Ascending aorta (tissue), 2 donors: ENCODE measurements at regions of chr12 and their contacts with region 1.

Region 1: GRCh38 chr12:121858662-121859572 is at the start of gene HPD:
- DNase-seq: peak; percentile 33 to 90
- H3K4me3 ChIP-seq: peak within 1 kb of the TSS; percentile 10 to 16
- H3K27ac ChIP-seq: peak within 1 kb of the TSS; percentile 97
- H3K4me1 ChIP-seq: peaks cover 18 to 33% of the 10 kb centered on the region in 2 donors
- H3K27me3 ChIP-seq: no peaks in the 10 kb centered on the region
- CTCF ChIP-seq: no peak
- total RNA-seq, gene HPD: 0.96 TPM

Region 2: DNA sequence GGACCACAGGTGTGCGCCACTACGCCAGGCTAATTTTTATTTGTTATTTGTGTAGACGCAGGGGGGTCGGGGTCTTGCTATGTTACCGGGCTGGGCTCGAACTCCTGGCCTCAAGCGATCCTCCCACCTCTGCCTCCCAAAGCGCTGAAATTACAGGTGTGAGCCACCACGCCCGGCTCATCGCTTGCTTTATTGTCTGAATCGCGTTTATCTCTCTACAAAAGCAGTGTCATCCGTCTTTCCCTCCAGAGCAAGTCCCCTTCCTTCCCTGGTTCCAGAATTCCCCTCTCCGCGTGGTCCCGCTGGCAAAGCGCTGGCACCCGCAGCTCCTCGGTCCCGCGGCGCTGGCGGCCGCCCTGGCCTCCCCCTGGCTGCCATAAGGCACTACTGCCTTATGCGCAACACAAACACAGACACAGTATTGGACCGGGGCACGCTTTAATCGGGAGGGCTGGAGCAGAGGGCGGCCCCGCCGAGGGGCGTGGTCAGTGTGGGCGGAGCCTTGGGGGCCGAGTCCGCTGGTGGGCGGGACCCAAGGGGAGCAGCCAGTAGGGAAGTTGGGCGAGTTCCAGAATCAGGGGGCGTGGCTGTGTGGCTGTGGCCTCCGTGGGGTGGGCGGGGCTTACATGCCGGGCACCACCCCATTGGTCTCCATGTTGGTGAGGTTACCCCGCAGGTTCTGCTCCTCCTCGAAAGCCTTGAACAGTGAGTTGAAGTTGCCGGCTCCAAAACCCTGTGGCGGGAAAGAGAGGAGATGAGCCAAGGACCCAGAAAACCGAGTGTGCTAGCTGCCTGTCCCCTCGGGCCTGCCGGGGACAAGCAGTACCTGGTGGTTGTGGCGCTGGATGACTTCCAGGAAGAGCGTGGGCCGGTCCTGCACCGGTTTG is 19.6 kb before region 1 on chr12:
- intact Hi-C with region 1: loop called (anchors 1 kb)
- DNase-seq: peak; percentile 97 to 100
- H3K4me3 ChIP-seq: peak overlapping the region; percentile 63 to 87
- H3K27ac ChIP-seq: peak overlapping the region; percentile 22 to 70
- H3K4me1 ChIP-seq: peaks cover 0 to 11% of the 10 kb centered on the region in 2 donors
- H3K27me3 ChIP-seq: no peaks in the 10 kb centered on the region
- CTCF ChIP-seq: peak; percentile 44 to 60 (median 44)